CD8-positive, alpha-beta memory T cell (primary cell): ENCODE measurements at regions of chr3 and their contacts with region 1.

Region 1: DNA sequence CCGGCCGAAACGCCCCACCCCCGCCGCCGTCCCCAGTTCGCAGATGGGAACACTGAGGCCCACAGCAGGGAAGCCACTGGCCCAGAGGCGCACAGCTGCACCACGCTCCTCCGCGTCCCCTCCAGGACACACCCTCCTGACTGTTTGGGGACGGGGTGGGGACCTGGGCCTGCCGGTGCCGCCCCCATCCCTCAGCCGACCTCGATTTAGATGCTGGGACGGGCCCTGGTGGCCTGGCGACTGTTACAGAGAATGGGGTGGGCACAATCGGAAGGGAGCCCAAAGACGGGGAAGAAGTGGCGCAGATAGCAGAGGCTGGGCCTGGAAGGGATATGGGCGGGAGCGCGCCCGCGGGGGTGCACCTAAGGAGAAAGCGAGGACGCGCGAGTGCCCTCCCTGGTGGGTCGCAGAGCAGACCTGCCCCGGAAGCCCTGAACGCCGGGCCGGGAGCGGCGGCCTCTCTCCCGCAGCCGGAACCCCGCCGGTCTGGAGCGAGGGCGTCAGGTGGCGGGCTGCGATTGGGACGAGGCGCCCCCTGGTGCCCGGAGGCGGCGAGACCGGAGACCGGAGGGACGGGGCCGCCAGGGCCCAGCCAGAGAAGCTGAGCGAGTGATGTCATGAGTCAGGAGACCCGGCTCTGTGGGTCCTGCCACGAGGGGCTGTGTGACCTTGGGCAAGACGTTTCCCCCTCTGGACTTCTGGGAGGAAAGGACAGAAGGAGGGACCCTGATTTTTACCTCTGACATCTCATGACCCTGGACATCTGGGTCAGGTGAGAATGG is 78.4 kb downstream of the IQSEC1 start:
- DNase-seq: peak; percentile 82 to 89 (median 86)
- H3K4me3 ChIP-seq: peak overlapping the region; percentile 93
- H3K4me3 Mint-ChIP-seq: peak overlapping the region; percentile 91 to 97 (median 95)
- H3K27ac ChIP-seq: peak overlapping the region; percentile 78
- H3K27ac Mint-ChIP-seq: peak overlapping the region; percentile 82 to 99 (median 97)
- H3K4me1 ChIP-seq: peaks cover 49% of the 10 kb centered on the region
- H3K4me1 Mint-ChIP-seq: peaks cover 51 to 77% (median 63%) of the 10 kb centered on the region in 3 donors
- H3K27me3 ChIP-seq: no peaks in the 10 kb centered on the region
- H3K27me3 Mint-ChIP-seq: no peaks in the 10 kb centered on the region

Region 2: DNA sequence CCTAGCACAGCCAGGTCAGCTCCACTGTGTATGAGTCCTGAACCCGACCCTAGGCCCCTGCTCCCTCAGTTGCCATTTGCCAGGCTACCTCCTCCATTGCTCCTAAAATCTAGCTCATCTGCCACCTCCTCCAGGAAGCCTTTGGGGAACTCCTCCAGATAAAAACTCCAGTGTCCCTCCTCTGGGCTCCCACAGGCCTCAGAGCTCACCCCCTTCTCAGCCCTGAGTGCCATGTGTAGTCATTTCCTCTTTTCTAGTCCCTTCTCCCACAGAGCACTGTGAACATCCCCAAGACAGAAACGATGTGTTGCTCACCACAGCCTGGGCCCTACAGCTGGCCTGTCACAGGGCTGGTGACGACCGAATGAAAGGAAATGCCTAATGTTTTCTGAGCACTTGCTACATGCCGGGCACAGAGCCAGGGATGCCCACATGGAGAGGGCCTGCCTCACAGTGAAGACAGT is 17.5 kb after region 1 on chr3:
- CTCF ChIA-PET with region 1: interaction called, 134 read pairs
- POLR2A ChIA-PET with region 1: interaction called, 26 read pairs
- DNase-seq: peak in 4 of 5 donors; percentile 41 to 67 (median 47)
- H3K4me3 ChIP-seq: peak overlapping the region; percentile 40
- H3K4me3 Mint-ChIP-seq: peak overlapping the region; percentile 80 to 96 (median 86)
- H3K27ac ChIP-seq: peak overlapping the region; percentile 95
- H3K27ac Mint-ChIP-seq: peak overlapping the region; percentile 96 to 100 (median 99)
- H3K4me1 ChIP-seq: peaks cover 94% of the 10 kb centered on the region
- H3K4me1 Mint-ChIP-seq: peaks cover 80 to 99% (median 84%) of the 10 kb centered on the region in 3 donors
- H3K27me3 ChIP-seq: no peaks in the 10 kb centered on the region
- H3K27me3 Mint-ChIP-seq: no peaks in the 10 kb centered on the region

Region 3: GRCh38 chr3:13057282-13058040 is 62.7 kb after region 1 on chr3:
- CTCF ChIA-PET with region 1: no interaction called
- POLR2A ChIA-PET with region 1: no interaction called
- DNase-seq: no peak
- H3K4me3 ChIP-seq: no peak overlapping the region
- H3K4me3 Mint-ChIP-seq: no peak overlapping the region
- H3K27ac ChIP-seq: no peak overlapping the region
- H3K27ac Mint-ChIP-seq: peak overlapping the region in 1 of 8 donors; percentile 22
- H3K4me1 ChIP-seq: no peaks in the 10 kb centered on the region
- H3K4me1 Mint-ChIP-seq: peaks cover 0 to 5% (median 1%) of the 10 kb centered on the region in 3 donors
- H3K27me3 ChIP-seq: no peaks in the 10 kb centered on the region
- H3K27me3 Mint-ChIP-seq: no peaks in the 10 kb centered on the region